ENCODE measurements at regions of chr19 and their contacts with region 1.

Region 1: GRCh38 chr19:51712460-51713083 is 11.2 kb downstream of the HAS1 start:
- DNase-seq: no peak
- H3K4me3 ChIP-seq: no peak overlapping the region
- H3K27ac ChIP-seq: no peak overlapping the region
- H3K4me1 ChIP-seq: peaks cover 2% of the 10 kb centered on the region
- H3K27me3 ChIP-seq: no peaks in the 10 kb centered on the region
- CTCF ChIP-seq: no peak
- EP300 ChIP-seq: no peak
- POLR2A ChIP-seq: no peak

Region 2: DNA sequence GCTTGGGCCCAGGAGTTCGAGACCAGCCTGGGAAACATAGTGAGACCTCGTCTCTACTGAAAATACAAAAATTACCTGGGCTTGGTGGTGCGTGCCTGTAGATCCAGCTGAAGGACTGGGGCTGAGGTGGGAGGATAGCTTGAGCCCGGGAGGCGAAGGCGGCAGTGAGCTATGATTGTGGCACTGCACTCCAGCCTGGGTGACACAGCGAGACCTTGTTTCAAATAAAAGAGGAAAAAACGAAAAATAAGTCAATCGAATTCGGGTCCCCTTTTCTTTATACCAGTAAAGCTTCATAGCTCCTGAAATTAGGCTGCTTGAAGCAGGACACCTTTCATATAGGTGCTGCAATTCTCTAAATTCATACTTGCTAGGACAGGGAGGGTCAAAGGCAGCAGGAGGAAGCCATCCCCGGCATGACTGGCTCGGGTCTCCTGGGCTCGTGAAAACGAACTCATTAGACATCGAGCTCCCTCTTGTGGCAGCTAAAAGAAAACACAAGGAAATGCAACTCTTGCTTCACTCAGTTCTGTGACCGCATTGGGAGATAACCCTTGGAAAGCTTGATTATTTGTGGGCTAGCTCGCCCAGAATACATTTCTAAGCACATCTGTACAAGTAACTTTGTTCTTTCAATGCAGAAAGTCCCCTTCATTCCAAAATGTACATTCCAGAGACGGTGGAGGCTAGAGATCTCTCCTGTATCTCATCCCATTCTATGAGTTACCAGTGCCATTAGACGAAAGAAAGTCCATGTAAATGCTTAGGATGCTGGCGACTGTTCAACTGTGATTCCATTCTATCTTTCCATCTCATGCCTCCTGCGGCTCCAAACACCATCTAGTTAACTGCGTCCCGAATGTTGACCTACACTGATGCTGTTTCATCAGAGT is 65.2 kb after region 1 on chr19:
- intact Hi-C with region 1: loop called in 1 of 4 experiments (anchors 10 kb)
- DNase-seq: peak; percentile 73 to 82 (median 79)
- H3K4me3 ChIP-seq: no peak overlapping the region
- H3K27ac ChIP-seq: no peak overlapping the region
- H3K4me1 ChIP-seq: peaks cover 2% of the 10 kb centered on the region
- H3K27me3 ChIP-seq: no peaks in the 10 kb centered on the region
- CTCF ChIP-seq: peak; percentile 68 to 82 (median 69)
- EP300 ChIP-seq: no peak
- POLR2A ChIP-seq: no peak